ENCODE measurements at regions of chr2 and their contacts with region 1.

Region 1: DNA sequence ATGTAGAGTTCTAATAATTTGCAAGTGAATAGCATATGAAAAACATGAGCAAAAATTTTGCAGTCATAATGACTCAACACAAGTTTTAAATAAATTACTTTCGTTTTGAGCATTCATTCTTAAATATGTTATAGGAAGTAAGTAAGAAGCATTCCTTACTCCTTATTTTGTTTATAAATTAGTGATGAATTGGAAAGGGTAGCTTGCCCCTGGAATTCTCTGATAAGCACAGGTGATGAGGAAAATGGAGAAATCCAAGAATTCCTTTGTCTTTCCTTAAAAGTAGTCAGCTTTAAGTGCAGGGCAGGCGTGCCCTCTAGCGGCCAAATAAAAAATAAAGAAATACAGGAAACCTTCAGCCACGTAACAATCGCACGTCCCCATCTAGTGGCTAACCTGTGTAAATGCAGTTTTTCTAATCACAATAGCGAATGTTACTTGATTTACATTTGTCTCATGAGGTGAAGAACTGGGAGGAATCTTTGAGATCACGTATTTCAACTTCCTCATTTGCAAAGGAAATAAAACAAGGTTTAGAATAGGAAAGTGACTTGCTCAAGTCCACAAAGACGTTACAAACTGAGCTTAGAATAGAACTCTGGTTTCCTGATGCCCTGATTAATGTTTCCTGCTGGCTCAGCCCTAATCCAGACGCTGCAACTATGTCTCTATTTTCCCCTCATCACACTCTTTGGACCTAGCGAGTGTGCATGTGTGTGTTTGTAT is 47.2 kb upstream of the ZNG1B start:
- DNase-seq: peak; percentile 66
- ATAC-seq: peak; percentile 98
- H3K4me3 Mint-ChIP-seq: peak overlapping the region; percentile 55
- H3K27ac Mint-ChIP-seq: peak overlapping the region; percentile 55
- H3K4me1 Mint-ChIP-seq: peaks cover 8% of the 10 kb centered on the region
- H3K27me3 Mint-ChIP-seq: peaks cover 7% of the 10 kb centered on the region
- CTCF ChIP-seq: peak; percentile 96

Region 2: DNA sequence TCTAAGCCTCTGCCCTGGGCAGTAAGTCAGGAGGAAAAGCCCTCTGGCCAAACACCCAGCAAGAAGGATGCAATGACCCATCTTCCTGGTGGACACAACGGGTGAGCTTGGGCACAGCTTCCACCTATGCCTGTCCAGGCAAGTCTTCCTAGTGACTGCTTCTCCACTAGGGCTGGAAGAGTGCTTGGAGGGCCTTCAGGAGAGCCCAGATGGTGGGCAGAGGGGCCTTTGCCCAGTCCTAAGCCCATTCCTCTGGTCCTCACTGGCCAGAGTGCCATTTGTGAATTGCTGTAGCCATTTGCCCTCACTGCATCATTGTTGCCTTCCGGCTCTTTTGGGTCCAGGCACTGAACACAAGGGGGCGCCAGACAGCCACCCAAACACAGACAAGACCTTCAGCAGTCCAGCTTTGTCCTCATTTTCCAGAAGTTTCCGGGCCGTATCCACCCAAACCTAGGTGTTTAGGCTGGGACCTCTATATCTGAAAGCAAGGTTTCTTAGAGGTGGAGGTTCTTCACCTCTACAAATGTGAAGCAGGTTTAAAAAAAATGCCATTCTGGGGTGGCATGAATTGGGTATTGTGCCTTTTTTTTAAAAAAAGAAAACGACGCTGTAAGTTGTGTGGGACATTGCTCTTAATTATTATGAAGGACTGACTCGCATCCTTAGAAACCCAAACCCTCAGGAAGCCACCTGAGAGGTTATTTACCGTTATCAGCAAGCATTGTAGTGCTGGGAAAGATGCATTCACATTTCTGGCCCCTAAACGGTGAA is 141.1 kb before region 1 on chr2:
- CTCF ChIA-PET with region 1: interaction called, 37 read pairs
- POLR2A ChIA-PET with region 1: no interaction called
- intact Hi-C with region 1: no loop called
- DNase-seq: peak; percentile 86
- ATAC-seq: peak; percentile 46
- H3K4me3 Mint-ChIP-seq: no peak overlapping the region
- H3K27ac Mint-ChIP-seq: peak overlapping the region; percentile 73
- H3K4me1 Mint-ChIP-seq: peaks cover 45% of the 10 kb centered on the region
- H3K27me3 Mint-ChIP-seq: no peaks in the 10 kb centered on the region
- CTCF ChIP-seq: peak; percentile 90

Region 3: DNA sequence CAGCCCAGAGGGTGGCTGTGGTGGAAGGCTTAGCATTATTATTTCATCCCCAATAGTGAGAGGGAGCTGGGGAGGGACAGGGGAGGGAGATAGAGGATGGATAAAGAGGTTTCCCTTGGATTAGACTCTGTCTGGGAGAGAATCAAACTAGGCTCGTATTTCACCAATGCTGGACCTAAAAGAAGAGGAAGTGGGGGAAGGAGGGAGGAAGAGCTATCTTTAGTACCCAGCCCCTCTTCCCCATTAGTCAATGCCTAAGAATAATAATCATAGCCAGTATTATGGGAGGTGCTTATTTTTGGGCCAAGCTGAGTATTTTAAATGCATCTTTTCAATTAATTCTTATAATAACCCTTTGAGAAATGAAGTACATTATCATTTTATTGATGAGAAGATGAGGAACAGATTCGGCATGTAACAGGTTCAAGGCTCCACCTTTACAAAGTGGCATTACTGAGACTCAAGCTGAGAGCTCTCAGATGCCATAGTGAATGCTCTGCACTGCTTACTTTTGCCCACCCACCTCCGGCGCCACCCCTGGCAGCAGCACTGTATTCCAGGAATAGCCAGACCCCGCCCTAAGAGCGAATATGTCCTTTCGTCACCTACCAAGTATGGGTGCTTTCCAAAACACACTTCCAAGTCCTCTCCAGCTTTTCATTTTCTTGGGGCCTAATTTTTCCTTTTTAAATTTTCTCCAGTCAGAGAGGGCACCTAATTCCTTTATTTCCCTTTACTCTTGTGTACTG is 132.6 kb before region 1 on chr2:
- CTCF ChIA-PET with region 1: interaction called, 11 read pairs
- POLR2A ChIA-PET with region 1: no interaction called
- intact Hi-C with region 1: no loop called
- DNase-seq: no peak
- ATAC-seq: no peak
- H3K4me3 Mint-ChIP-seq: no peak overlapping the region
- H3K27ac Mint-ChIP-seq: no peak overlapping the region
- H3K4me1 Mint-ChIP-seq: peaks cover 36% of the 10 kb centered on the region
- H3K27me3 Mint-ChIP-seq: no peaks in the 10 kb centered on the region
- CTCF ChIP-seq: no peak